ENCODE measurements at regions of chr15 and their contacts with region 1.

Region 1: GRCh38 chr15:66841953-66842681 is 140.1 kb downstream of the SMAD6 start:
- DNase-seq: peak; percentile 81 to 88
- H3K4me3 ChIP-seq: peak overlapping the region; percentile 37
- H3K4me3 Mint-ChIP-seq: peak overlapping the region; percentile 89
- H3K27ac Mint-ChIP-seq: peak overlapping the region; percentile 96
- H3K4me1 ChIP-seq: peaks cover 26% of the 10 kb centered on the region
- H3K4me1 Mint-ChIP-seq: peaks cover 12% of the 10 kb centered on the region
- H3K27me3 ChIP-seq: no peaks in the 10 kb centered on the region
- H3K27me3 Mint-ChIP-seq: no peaks in the 10 kb centered on the region
- CTCF ChIP-seq: no peak

Region 2: DNA sequence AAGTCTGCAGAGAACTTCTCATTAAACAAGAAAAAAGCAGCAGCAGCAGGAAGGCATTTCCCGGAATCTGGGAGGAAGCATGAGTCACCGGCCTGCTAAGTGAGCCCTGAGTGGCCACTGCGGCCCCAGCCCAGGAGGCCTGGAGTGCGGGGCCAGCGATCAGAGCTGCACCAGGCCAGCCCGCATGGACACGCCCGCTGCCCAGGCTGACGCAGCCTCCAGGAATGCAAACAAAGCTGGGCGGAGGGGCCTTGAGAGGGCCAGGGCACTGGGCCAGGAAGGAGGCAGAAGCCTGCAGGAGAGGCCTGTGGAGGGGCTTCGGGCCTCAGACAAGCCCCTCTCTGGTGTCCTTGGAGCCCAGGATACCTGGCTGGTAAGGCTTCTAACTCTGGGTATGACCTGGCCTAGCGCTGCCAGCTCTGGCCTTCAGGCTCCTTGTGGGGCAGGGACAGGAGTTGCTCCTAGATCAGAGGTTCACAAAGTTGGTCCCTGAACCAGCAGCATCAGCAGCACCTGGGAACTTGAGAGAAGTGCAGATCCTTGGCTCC is 38.9 kb before region 1 on chr15:
- CTCF ChIA-PET with region 1: no interaction called
- POLR2A ChIA-PET with region 1: no interaction called
- intact Hi-C with region 1: loop called (anchors 1 kb)
- DNase-seq: peak; percentile 88 to 90
- H3K4me3 ChIP-seq: no peak overlapping the region
- H3K4me3 Mint-ChIP-seq: peak overlapping the region; percentile 24
- H3K27ac Mint-ChIP-seq: peak overlapping the region; percentile 77
- H3K4me1 ChIP-seq: peaks cover 22% of the 10 kb centered on the region
- H3K4me1 Mint-ChIP-seq: peaks cover 16% of the 10 kb centered on the region
- H3K27me3 ChIP-seq: no peaks in the 10 kb centered on the region
- H3K27me3 Mint-ChIP-seq: no peaks in the 10 kb centered on the region
- CTCF ChIP-seq: no peak

Region 3: GRCh38 chr15:66862878-66863335 is 20.8 kb after region 1 on chr15:
- CTCF ChIA-PET with region 1: no interaction called
- POLR2A ChIA-PET with region 1: no interaction called
- intact Hi-C with region 1: no loop called
- DNase-seq: peak; percentile 76 to 81
- H3K4me3 ChIP-seq: no peak overlapping the region
- H3K4me3 Mint-ChIP-seq: no peak overlapping the region
- H3K27ac Mint-ChIP-seq: no peak overlapping the region
- H3K4me1 ChIP-seq: peaks cover 20% of the 10 kb centered on the region
- H3K4me1 Mint-ChIP-seq: peaks cover 12% of the 10 kb centered on the region
- H3K27me3 ChIP-seq: no peaks in the 10 kb centered on the region
- H3K27me3 Mint-ChIP-seq: no peaks in the 10 kb centered on the region
- CTCF ChIP-seq: peak; percentile 86 to 88

Region 4: GRCh38 chr15:66894986-66895780 is 53.1 kb after region 1 on chr15:
- CTCF ChIA-PET with region 1: no interaction called
- POLR2A ChIA-PET with region 1: no interaction called
- intact Hi-C with region 1: no loop called
- DNase-seq: no peak
- H3K4me3 ChIP-seq: no peak overlapping the region
- H3K4me3 Mint-ChIP-seq: no peak overlapping the region
- H3K27ac Mint-ChIP-seq: no peak overlapping the region
- H3K4me1 ChIP-seq: peaks cover 29% of the 10 kb centered on the region
- H3K4me1 Mint-ChIP-seq: peaks cover 37% of the 10 kb centered on the region
- H3K27me3 ChIP-seq: no peaks in the 10 kb centered on the region
- H3K27me3 Mint-ChIP-seq: no peaks in the 10 kb centered on the region
- CTCF ChIP-seq: no peak

Measured in Caco-2 (cell line).